A673 (cell line): ENCODE measurements at regions of chr10 and their contacts with region 1.

Region 1: DNA sequence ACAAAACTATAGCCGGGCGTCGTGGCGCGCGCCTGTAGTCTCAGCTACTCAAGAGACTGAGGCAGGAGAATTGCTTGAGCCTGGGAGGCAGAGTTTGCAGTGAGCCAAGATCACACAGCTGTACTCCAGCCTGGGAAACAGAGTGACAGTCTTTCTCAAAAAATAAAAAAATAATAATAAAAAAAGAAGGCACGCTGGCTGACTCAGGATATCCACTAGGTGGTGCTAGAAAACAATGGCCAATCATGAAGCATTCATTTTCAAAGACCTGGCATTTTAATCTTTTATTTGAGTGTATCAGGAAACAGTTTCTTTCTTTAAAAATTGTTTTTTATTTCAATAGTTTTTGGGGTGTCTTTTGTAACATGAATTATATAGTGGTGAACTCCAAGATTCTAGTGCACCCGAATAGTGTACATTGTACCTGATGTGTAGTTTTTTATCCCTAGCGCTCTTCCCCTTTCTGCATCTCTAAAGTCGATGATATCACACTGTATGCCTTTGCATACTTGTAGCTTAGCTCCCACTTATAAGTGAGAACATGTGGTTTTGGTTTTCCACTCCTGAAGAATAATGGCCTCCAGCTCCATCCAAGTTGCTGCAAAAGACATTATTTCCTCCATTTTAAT is 88.6 kb downstream of the LYZL1 start:
- DNase-seq: peak; percentile 70
- H3K4me3 ChIP-seq: no peak overlapping the region
- H3K27ac ChIP-seq: peak overlapping the region; percentile 92
- H3K4me1 ChIP-seq: peaks cover 41% of the 10 kb centered on the region
- H3K27me3 ChIP-seq: no peaks in the 10 kb centered on the region
- CTCF ChIP-seq: peak; percentile 80

Region 2: DNA sequence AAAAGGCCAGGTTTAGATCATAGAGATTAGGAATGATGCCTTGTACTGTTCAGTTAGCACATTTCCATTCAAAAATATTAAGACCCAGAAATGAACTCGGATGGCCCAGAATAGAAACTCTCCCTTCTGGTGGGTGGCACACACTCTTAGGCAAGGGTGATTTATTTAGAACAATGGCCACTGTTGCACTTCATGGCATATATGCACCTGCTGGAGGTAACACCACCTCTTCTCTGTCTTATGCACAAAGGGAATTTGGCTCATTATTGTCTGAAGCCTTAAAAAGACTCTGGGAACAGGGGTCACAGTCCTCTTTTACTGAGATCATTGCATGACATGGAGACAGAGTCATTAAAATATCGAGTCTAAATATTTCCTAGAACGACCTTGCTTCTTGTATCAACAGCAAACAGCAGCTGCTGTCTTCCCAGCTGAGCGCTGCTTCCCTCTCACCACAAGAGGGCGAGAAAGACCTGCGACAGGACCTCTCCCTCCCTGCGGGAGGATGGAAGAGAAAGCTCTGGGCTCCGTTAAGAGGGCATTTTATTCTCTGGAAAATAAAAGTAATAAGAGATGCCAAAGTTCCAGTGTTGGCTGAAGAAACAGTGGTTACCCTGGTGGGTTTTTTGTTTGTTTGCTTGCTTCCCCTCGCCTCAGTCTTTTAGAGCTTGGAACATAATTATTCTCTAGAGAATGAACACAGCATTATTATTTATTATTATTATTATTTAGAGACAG is 713.7 kb before region 1 on chr10:
- CTCF ChIA-PET with region 1: no interaction called
- POLR2A ChIA-PET with region 1: no interaction called
- intact Hi-C with region 1: loop called (anchors 5 kb)
- DNase-seq: peak; percentile 94
- H3K4me3 ChIP-seq: no peak overlapping the region
- H3K27ac ChIP-seq: no peak overlapping the region
- H3K4me1 ChIP-seq: no peaks in the 10 kb centered on the region
- H3K27me3 ChIP-seq: no peaks in the 10 kb centered on the region
- CTCF ChIP-seq: peak; percentile 98

Region 3: GRCh38 chr10:29446327-29446726 is 68.9 kb after region 1 on chr10:
- CTCF ChIA-PET with region 1: no interaction called
- POLR2A ChIA-PET with region 1: no interaction called
- intact Hi-C with region 1: loop called (anchors 5 kb)
- DNase-seq: no peak
- H3K4me3 ChIP-seq: no peak overlapping the region
- H3K27ac ChIP-seq: peak overlapping the region; percentile 87
- H3K4me1 ChIP-seq: peaks cover 55% of the 10 kb centered on the region
- H3K27me3 ChIP-seq: no peaks in the 10 kb centered on the region
- CTCF ChIP-seq: no peak

Region 4: DNA sequence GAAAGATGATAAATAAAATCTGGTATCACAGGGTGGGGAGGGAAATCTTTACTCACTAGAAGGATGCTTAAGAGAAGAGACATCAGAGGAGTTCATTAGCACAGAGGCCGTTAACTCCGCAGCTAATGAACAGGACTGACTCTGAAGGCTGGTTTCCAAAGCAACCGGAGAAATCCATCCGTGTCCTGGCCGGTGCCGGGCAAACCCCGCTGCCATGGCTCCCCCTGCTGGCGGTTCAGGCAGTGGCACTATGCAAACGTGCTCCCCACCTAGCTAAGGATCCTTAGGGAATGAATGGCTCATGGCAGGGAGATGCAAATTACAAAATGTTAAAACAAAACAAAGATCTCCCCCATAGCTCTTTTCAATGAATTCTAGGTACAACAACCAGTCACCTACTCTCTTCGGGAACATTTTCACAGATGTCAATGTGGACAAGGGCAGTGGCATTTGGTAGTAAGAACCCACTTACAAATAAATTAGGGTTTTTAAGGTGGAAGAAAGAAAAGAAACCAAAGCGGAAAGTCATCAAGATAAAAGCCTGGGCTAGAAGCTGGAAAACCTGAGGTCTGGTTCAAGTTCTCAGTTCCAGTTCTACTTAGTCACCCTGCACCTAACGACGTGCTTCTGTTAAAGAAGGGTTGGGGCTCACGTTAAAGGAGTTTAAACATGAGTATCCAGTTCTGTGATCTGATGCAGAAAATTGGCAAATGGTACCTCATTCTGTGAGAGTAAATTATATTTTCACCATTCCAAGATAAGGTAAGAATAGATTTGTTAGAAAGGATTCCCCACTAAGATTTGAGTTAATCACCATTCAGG is 119.1 kb after region 1 on chr10:
- CTCF ChIA-PET with region 1: no interaction called
- POLR2A ChIA-PET with region 1: no interaction called
- intact Hi-C with region 1: loop called (anchors 5 kb)
- DNase-seq: peak; percentile 86
- H3K4me3 ChIP-seq: no peak overlapping the region
- H3K27ac ChIP-seq: no peak overlapping the region
- H3K4me1 ChIP-seq: peaks cover 12% of the 10 kb centered on the region
- H3K27me3 ChIP-seq: no peaks in the 10 kb centered on the region
- CTCF ChIP-seq: peak; percentile 98

Region 5: GRCh38 chr10:29585488-29585980 is 208.1 kb after region 1 on chr10:
- CTCF ChIA-PET with region 1: interaction called, 10 read pairs
- POLR2A ChIA-PET with region 1: no interaction called
- intact Hi-C with region 1: no loop called
- DNase-seq: peak; percentile 12
- H3K4me3 ChIP-seq: no peak overlapping the region
- H3K27ac ChIP-seq: no peak overlapping the region
- H3K4me1 ChIP-seq: peaks cover 34% of the 10 kb centered on the region
- H3K27me3 ChIP-seq: no peaks in the 10 kb centered on the region
- CTCF ChIP-seq: no peak